Activated CD4-positive, alpha-beta T cell treated with anti-CD3 and anti-CD28 coated beads for 36 hours (primary cell): ENCODE measurements at regions of chr1 and their contacts with region 1.

Region 1: DNA sequence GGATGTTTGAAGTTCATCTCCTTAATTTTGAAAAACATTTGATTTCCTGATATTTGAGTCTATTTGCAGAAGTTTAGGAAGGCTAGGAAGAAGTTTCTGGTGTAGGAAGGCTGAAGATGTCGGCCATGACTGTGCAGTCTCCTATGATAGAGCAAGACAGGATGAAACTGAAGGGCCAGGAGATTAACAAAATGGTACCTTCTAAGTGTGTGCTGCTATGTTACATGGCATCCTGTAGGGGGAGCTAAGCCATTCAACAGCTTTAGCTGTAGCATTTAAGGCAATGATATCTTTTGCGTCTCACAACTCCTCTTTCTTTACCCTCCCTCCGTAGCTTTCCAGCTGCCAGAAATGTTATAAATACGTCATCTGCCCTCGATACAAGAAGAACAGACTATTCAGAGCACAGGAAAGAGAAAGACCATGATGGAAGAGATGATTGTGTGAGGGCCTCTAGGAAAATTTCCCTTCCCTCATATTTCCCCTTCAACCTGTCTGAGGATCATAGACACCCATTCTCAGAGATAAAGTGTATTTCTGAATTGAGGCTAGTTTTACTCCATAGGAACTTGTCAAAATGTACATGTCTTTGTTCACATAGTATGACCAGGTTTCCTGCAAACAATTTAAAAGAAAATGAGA is 61.1 kb downstream of the XCL1 start:
- DNase-seq: no peak
- ATAC-seq: peak; percentile 65
- H3K4me3 Mint-ChIP-seq: no peak overlapping the region
- H3K27ac Mint-ChIP-seq: no peak overlapping the region
- H3K4me1 Mint-ChIP-seq: no peaks in the 10 kb centered on the region
- H3K27me3 Mint-ChIP-seq: peaks cover 9% of the 10 kb centered on the region

Region 2: DNA sequence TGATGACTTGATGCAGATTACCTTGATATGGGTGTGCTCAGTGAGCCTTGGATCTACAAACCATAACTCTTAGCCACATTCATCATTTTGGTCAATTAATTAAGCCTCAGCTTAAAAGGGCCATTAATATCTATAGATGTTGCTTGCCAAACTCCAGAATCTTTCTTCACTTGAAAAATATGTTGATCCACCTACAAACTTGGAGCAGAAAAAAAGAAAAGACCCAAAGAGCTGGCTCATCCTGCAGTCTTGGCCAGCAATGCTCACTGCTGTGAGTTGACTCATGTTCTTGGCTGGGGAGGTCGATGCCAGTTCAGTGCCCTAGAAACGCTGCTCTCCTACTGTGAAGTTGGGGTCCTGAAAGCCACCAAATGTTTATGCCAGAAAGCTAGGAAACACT is 16.1 kb after region 1 on chr1:
- CTCF ChIA-PET with region 1: interaction called, 15 read pairs
- POLR2A ChIA-PET with region 1: no interaction called
- intact Hi-C with region 1: no loop called
- DNase-seq: no peak
- ATAC-seq: no peak
- H3K4me3 Mint-ChIP-seq: no peak overlapping the region
- H3K27ac Mint-ChIP-seq: no peak overlapping the region
- H3K4me1 Mint-ChIP-seq: no peaks in the 10 kb centered on the region
- H3K27me3 Mint-ChIP-seq: peaks cover 2% of the 10 kb centered on the region